Dendritic cell treated with granulocyte-macrophage colony-stimulating factor and Interleukin-4, amounts not matched to agents 40 ng/mL and 50 ng/mL, for 4 days (primary cell): ENCODE measurements at regions of chr10 and their contacts with region 1.

Region 1: DNA sequence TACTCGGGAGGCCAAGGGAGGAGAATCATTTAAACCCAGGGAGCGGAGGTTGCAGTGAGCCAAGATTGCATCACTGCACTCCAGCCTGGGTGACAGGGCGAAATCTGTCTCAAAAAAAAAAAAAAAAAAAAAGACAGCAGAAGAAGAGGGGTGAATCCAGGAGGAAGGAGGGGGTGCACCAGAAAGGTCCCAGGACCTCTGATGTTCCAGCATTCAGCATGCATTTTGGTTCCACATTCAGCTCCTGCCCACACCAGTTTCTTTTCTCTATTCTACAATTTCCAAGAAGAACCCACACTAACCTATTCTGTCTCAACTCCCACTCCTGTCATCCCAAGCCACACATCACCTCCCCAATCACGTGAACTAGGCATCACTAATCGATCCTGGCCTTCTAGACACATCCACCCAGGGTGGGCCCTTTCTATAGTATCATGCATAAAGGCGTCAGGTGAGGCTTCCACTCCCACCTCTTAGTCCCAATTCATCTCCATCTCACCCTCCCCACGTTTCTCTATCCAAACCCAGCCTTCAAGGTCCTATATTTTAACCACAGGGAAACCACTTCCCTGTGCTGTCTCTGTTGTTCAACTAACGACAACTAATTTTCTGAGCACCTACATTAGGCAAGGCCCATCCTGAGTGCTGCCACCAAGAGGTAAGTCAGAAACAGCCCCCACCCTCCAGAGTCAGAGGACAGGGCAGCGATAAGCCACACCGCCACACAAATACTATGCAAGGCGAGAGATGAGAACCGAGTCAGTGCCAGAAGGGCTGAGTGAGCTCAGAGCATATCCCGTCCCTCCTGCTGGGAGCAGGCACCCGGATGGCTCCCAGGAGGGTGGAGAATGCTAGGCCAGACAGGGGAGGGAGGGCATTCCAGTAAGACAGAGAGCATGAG is 2.2 kb downstream of the ANXA11 start:
- H3K4me3 Mint-ChIP-seq: peak overlapping the region; percentile 88
- H3K27ac Mint-ChIP-seq: peak overlapping the region; percentile 98
- H3K4me1 Mint-ChIP-seq: peaks cover 67% of the 10 kb centered on the region
- H3K27me3 Mint-ChIP-seq: no peaks in the 10 kb centered on the region

Region 2: GRCh38 chr10:79221110-79222051 is 981.8 kb before region 1 on chr10:
- intact Hi-C with region 1: no loop called
- H3K4me3 Mint-ChIP-seq: no peak overlapping the region
- H3K27ac Mint-ChIP-seq: no peak overlapping the region
- H3K4me1 Mint-ChIP-seq: peaks cover 44% of the 10 kb centered on the region
- H3K27me3 Mint-ChIP-seq: no peaks in the 10 kb centered on the region

Region 3: GRCh38 chr10:79904671-79905321 is 298.4 kb before region 1 on chr10:
- intact Hi-C with region 1: no loop called
- H3K4me3 Mint-ChIP-seq: peak overlapping the region; percentile 90
- H3K27ac Mint-ChIP-seq: peak overlapping the region; percentile 65
- H3K4me1 Mint-ChIP-seq: peaks cover 14% of the 10 kb centered on the region
- H3K27me3 Mint-ChIP-seq: peaks cover 55% of the 10 kb centered on the region

Region 4: DNA sequence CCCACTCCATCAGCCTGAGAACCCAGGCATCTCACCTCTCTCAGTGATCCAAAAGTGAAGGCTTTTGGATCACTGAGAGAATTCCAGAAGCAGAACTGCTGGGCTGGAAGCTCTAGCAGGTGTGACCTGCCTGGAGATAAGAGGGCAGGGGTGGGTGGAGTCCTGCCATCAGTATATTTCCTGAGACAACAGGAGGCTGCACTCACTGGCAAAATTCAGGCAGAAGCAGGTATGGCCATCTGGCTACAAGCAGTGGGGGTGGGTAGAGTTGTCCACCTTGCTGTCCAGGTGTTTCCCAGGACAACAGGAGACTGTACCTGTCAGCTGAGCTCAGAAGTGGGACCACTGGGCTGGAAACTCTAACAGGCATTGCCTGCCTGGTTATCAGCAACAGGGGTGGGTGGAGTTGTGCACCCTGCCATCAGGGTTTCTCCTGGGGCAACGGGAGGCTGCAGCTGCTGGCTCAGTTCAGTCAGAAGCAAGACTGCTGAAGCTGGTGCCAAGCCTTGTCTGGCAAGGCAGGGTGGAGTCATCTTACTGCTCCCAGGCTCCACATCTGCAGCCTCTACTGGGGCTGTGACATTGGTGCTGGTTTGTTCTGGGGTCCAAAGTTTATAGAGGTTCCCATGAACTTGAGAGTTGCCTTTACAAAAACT is 207.1 kb before region 1 on chr10:
- intact Hi-C with region 1: no loop called
- H3K4me3 Mint-ChIP-seq: no peak overlapping the region
- H3K27ac Mint-ChIP-seq: no peak overlapping the region
- H3K4me1 Mint-ChIP-seq: no peaks in the 10 kb centered on the region
- H3K27me3 Mint-ChIP-seq: peaks cover 26% of the 10 kb centered on the region

Region 5: GRCh38 chr10:80168679-80169380 is 34.4 kb before region 1 on chr10:
- intact Hi-C with region 1: loop called (anchors 5 kb)
- H3K4me3 Mint-ChIP-seq: no peak overlapping the region
- H3K27ac Mint-ChIP-seq: peak overlapping the region; percentile 88
- H3K4me1 Mint-ChIP-seq: peaks cover 95% of the 10 kb centered on the region
- H3K27me3 Mint-ChIP-seq: no peaks in the 10 kb centered on the region

Region 6: DNA sequence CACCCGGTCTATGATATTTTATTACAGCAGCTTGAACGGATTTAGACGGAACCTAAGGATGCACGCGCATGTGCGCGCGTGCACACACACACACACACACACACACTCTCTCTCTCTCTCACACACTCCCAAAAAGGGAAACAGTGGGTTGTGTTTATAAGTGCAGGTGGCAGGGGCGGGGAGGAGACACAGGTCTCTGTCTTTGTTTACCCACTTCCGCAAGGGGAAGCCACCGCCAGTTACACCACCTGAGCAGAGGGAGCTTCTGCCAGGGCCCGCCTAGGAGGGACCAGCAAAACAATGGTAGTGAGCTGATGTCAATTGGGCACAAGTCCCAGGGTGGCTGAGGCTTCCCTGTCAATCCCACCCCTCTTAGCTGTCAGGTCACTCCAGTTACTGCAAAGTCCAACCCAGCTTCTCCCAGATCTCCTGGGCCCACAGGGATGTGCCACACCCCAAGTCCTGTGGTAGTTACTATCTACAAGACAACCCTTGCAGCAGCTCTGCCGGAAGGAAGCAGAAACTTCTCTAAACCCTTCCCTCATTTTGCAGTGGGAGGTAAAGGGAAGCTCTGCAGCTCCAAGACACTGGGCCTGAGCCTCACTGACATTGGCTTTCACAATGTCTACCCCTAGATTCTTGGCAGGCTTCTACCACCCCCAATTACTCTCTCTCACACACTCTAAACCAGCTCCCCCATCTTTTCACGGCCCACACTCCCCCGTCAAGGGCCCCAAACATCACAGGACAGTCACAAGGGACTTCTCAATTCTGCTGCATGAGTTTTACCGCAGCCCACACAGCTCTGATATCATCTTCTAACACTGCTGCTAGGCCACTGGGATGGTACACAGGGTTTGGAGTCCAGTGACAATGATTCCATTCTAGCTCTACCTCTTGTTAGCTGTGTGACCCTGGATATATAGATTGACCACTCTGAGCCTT is 15.4 kb before region 1 on chr10:
- intact Hi-C with region 1: loop called (anchors 2 kb)
- H3K4me3 Mint-ChIP-seq: peak overlapping the region; percentile 33
- H3K27ac Mint-ChIP-seq: peak overlapping the region; percentile 78
- H3K4me1 Mint-ChIP-seq: peaks cover 88% of the 10 kb centered on the region
- H3K27me3 Mint-ChIP-seq: no peaks in the 10 kb centered on the region